ENCODE measurements at regions of chr19 and their contacts with region 1.

Region 1: GRCh38 chr19:50777754-50778303 is 7.6 kb downstream of the GPR32 start:
- DNase-seq: no peak
- ATAC-seq: no peak
- H3K4me3 ChIP-seq: no peak overlapping the region
- H3K27ac ChIP-seq: no peak overlapping the region
- H3K4me1 ChIP-seq: no peaks in the 10 kb centered on the region
- H3K27me3 ChIP-seq: peaks cover 11 to 99% (median 89%) of the 10 kb centered on the region in 7 donors
- CTCF ChIP-seq: no peak

Region 2: GRCh38 chr19:50357178-50358100 is 420.4 kb before region 1 on chr19:
- intact Hi-C with region 1: loop called in 7 of 10 experiments (anchors 1 to 10 kb)
- DNase-seq: peak; percentile 75 to 79
- ATAC-seq: peak; percentile 77 to 89 (median 80)
- H3K4me3 ChIP-seq: peak overlapping the region; percentile 35 to 67 (median 58)
- H3K27ac ChIP-seq: peak overlapping the region in 9 of 10 donors; percentile 77 to 88 (median 84)
- H3K4me1 ChIP-seq: peaks cover 0 to 16% (median 8%) of the 10 kb centered on the region in 9 donors
- H3K27me3 ChIP-seq: no peaks in the 10 kb centered on the region
- CTCF ChIP-seq: peak; percentile 83 to 94 (median 87)

Region 3: GRCh38 chr19:50537762-50538230 is 240.0 kb before region 1 on chr19:
- intact Hi-C with region 1: loop called (anchors 1 to 10 kb)
- DNase-seq: peak; percentile 69 to 83
- ATAC-seq: peak; percentile 55 to 89 (median 79)
- H3K4me3 ChIP-seq: no peak overlapping the region
- H3K27ac ChIP-seq: no peak overlapping the region
- H3K4me1 ChIP-seq: peaks cover 0 to 5% (median 0%) of the 10 kb centered on the region in 9 donors
- H3K27me3 ChIP-seq: peaks cover 0 to 9% (median 0%) of the 10 kb centered on the region in 7 donors
- CTCF ChIP-seq: peak; percentile 57 to 83 (median 78)

Region 4: GRCh38 chr19:50669302-50670101 is 108.3 kb before region 1 on chr19:
- intact Hi-C with region 1: loop called in 1 of 10 experiments (anchors 5 kb)
- DNase-seq: no peak
- ATAC-seq: no peak
- H3K4me3 ChIP-seq: no peak overlapping the region
- H3K27ac ChIP-seq: no peak overlapping the region
- H3K4me1 ChIP-seq: peaks cover 0 to 12% (median 5%) of the 10 kb centered on the region in 9 donors
- H3K27me3 ChIP-seq: peaks cover 3 to 96% (median 87%) of the 10 kb centered on the region in 7 donors
- CTCF ChIP-seq: peak; percentile 49 to 75 (median 69)

Region 5: DNA sequence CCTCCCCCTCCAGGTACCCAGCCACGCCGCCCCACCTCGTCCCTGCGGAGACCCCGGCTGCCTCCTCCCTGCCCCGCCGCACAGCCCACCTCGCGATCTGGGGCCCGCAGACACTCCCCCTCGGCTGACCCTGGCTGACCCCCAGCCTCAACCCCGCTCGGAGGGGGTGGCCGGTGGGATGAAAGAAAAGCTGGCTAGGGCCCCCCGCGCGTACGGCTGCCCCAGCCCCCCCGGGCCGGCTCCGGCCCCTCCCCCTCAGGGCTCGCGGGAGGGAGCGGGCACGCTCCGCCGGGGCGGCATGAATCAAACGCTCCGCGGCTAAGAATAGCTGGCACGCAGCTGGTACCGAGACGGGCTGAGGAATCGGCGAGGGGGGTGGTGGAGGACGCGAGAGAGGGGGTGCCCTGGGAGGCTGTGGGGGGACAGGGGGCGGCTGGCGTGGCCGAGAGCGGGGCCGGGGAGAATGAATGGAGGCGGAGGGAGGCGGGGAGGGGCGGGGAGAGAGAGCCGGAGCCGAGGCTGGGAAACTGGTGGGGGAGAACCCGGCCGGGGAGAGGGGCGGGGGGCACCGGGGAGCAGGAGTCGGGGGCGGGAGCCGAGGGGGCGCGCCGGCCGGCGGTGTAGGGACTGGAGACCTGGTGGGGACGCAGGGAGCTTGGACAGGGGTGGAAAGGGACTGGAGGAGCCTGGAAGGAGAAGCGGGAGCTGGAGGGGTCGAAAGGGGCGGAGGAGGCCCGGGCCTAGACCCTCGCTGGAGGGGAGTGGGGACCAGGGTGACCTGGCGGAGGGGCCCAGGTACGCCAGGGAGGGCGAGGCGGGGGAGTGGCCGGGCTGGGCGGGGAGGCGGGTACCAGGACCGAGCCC is 59.3 kb before region 1 on chr19:
- intact Hi-C with region 1: loop called in 1 of 10 experiments (anchors 5 kb)
- DNase-seq: no peak
- ATAC-seq: peak in 2 of 8 donors; percentile 16 to 20
- H3K4me3 ChIP-seq: peak overlapping the region in 9 of 10 donors; percentile 28 to 48 (median 40)
- H3K27ac ChIP-seq: no peak overlapping the region
- H3K4me1 ChIP-seq: peaks cover 0 to 19% (median 11%) of the 10 kb centered on the region in 9 donors
- H3K27me3 ChIP-seq: peaks cover 0 to 92% (median 63%) of the 10 kb centered on the region in 7 donors
- CTCF ChIP-seq: no peak

Measured in heart right ventricle (tissue), 16 donors.